CD14-positive monocyte (primary cell): ENCODE measurements at regions of chr13 and their contacts with region 1.

Region 1: GRCh38 chr13:51070005-51070649 is 40.9 kb downstream of the C13orf42 start:
- DNase-seq: peak; percentile 63 to 77 (median 71)
- H3K4me3 ChIP-seq: no peak overlapping the region
- H3K4me3 Mint-ChIP-seq: no peak overlapping the region
- H3K27ac ChIP-seq: no peak overlapping the region
- H3K27ac Mint-ChIP-seq: no peak overlapping the region
- H3K4me1 ChIP-seq: peaks cover 17 to 20% of the 10 kb centered on the region in 2 donors
- H3K4me1 Mint-ChIP-seq: peaks cover 28% of the 10 kb centered on the region
- H3K27me3 ChIP-seq: peaks cover 0 to 17% of the 10 kb centered on the region in 2 donors
- H3K27me3 Mint-ChIP-seq: peaks cover 3 to 20% (median 13%) of the 10 kb centered on the region in 3 donors
- CTCF ChIP-seq: peak; percentile 88

Region 2: GRCh38 chr13:49669735-49670309 is 1400.3 kb before region 1 on chr13:
- intact Hi-C with region 1: loop called in 1 of 2 experiments (anchors 10 kb)
- DNase-seq: peak in 1 of 3 donors; percentile 22
- H3K4me3 ChIP-seq: no peak overlapping the region
- H3K4me3 Mint-ChIP-seq: no peak overlapping the region
- H3K27ac ChIP-seq: no peak overlapping the region
- H3K27ac Mint-ChIP-seq: no peak overlapping the region
- H3K4me1 ChIP-seq: peaks cover 0 to 6% of the 10 kb centered on the region in 2 donors
- H3K4me1 Mint-ChIP-seq: peaks cover 8% of the 10 kb centered on the region
- H3K27me3 ChIP-seq: no peaks in the 10 kb centered on the region
- H3K27me3 Mint-ChIP-seq: peaks cover 0 to 3% (median 0%) of the 10 kb centered on the region in 3 donors
- CTCF ChIP-seq: peak; percentile 73

Region 3: GRCh38 chr13:49976314-49977258 is 1093.5 kb before region 1 on chr13:
- intact Hi-C with region 1: loop called (anchors 5 kb)
- DNase-seq: peak; percentile 54 to 74 (median 71)
- H3K4me3 ChIP-seq: no peak overlapping the region
- H3K4me3 Mint-ChIP-seq: no peak overlapping the region
- H3K27ac ChIP-seq: no peak overlapping the region
- H3K27ac Mint-ChIP-seq: peak overlapping the region in 1 of 7 donors; percentile 38
- H3K4me1 ChIP-seq: no peaks in the 10 kb centered on the region
- H3K4me1 Mint-ChIP-seq: peaks cover 11% of the 10 kb centered on the region
- H3K27me3 ChIP-seq: no peaks in the 10 kb centered on the region
- H3K27me3 Mint-ChIP-seq: peaks cover 0 to 2% (median 0%) of the 10 kb centered on the region in 3 donors
- CTCF ChIP-seq: peak; percentile 94

Region 4: DNA sequence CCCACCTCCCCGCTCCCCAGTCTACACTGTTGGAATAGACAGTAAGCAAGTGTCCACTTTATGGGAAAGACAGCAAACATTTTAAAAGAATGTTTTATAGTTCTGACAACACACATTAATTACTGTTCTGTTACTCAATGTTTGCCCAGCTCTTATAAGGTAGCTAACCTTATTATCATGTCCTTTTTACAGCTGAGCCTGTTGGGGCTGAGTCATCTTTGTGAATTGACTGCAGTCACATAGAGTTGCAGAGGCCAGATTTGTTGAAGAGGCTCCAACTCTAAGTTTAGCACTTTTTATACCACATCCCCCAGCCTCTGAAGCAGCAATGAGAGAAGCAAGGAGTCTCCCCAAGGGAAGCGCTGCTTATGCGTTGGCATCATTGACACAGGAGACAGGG is 35.2 kb before region 1 on chr13:
- intact Hi-C with region 1: no loop called
- DNase-seq: no peak
- H3K4me3 ChIP-seq: no peak overlapping the region
- H3K4me3 Mint-ChIP-seq: no peak overlapping the region
- H3K27ac ChIP-seq: no peak overlapping the region
- H3K27ac Mint-ChIP-seq: no peak overlapping the region
- H3K4me1 ChIP-seq: no peaks in the 10 kb centered on the region
- H3K4me1 Mint-ChIP-seq: no peaks in the 10 kb centered on the region
- H3K27me3 ChIP-seq: no peaks in the 10 kb centered on the region
- H3K27me3 Mint-ChIP-seq: peaks cover 0 to 2% (median 0%) of the 10 kb centered on the region in 3 donors
- CTCF ChIP-seq: no peak